Esophagus muscularis mucosa (tissue), 4 donors: ENCODE measurements at regions of chr20 and their contacts with region 1.

Region 1: DNA sequence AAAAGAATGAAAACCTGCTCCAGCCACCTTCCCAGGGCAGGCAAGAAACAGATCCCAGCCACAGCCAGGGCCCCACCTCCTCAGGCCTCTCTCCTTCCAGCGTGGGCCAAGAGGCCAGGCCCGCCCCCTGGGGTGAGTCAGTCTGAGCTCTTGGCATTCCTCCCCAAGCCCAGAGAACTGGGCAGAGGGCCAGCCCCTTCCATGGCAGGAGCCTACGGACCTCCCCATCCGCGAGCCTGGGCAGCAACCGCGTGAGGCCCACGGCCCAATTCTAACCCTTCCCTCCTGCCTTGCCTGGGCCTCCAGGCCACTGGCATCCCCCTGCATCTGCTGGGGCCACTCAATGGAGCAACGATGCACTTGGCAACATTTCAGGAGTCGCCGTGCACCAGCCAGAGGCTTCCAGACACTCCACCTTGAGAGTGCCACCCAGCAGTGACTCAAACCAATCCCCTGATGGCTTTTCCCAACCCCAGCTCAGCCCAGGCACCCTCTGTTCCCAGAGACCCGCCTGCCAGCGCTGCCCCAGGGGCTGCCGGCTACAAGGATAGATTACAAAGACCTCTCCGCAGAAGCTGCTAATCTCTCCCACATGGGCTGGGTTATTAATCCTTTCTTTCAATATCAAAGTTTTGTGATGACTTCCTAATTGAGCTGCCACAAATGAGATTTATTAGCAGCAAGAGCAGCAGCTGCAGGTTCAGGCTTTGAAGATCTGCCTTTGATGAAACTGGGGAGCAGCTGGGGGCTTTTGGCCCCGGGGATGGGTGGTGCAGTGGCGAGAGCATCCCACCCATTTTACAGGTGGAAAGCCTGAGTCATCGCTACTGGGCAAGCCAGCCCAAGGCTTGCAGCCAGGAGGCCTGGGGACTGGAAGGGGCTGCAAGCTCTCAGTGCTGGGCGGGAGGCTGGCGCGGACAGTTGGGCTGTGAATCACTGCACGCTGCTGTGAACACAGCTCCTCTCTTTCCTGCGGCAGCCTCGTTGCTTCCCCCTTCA is 85.7 kb downstream of the NFATC2 start:
- DNase-seq: peak; percentile 98
- H3K4me3 ChIP-seq: peak overlapping the region; percentile 17 to 36 (median 32)
- H3K27ac ChIP-seq: peak overlapping the region; percentile 75 to 85 (median 80)
- H3K4me1 ChIP-seq: peaks cover 17 to 30% (median 23%) of the 10 kb centered on the region in 4 donors
- H3K27me3 ChIP-seq: no peaks in the 10 kb centered on the region
- CTCF ChIP-seq: no peak
- EP300 ChIP-seq: no peak
- POLR2A ChIP-seq: no peak

Region 2: GRCh38 chr20:51562332-51563155 is 105.7 kb after region 1 on chr20:
- intact Hi-C with region 1: loop called (anchors 5 kb)
- DNase-seq: peak; percentile 95
- H3K4me3 ChIP-seq: peak overlapping the region; percentile 58 to 66 (median 60)
- H3K27ac ChIP-seq: peak overlapping the region; percentile 85 to 97 (median 90)
- H3K4me1 ChIP-seq: peaks cover 45 to 66% (median 58%) of the 10 kb centered on the region in 4 donors
- H3K27me3 ChIP-seq: no peaks in the 10 kb centered on the region
- CTCF ChIP-seq: peak; percentile 19 to 28 (median 27)
- EP300 ChIP-seq: peak; percentile 48
- POLR2A ChIP-seq: no peak